Posterior vena cava (tissue), 2 donors: ENCODE measurements at regions of chr20 and their contacts with region 1.

Region 1: GRCh38 chr20:40532103-40532502 is 156.9 kb downstream of the MAFB start:
- DNase-seq: no peak

Region 2: DNA sequence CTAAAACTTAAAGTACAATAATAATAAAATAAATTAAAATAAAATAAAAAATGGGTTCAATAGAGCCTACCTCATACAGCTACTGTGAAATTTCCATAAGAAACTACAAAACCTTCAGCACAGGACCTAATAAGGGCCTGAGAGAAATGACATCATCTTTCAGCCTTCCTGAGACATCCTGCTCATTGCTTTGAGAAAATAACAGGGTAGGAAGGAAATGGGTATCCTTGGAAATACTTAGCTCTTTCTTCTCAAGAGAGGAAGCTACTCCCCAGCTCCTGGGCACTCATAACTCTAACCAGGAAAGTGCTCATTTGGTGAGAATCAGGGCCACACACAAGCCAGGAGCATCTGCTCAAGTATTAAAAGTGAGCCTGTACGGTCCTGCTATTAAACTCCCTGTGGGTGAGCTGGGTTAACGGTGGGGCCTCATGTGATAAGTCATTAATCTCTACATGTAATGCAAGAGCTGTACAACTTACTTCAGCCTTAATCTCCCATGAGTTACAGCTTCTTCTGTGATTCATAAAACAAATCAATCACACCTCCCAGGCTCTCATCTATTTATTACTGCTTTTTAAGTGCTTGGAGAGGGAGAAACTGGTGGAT is 15.5 kb after region 1 on chr20:
- intact Hi-C with region 1: loop called in 1 of 2 experiments (anchors 1 kb)
- DNase-seq: no peak